ENCODE measurements at regions of chr18 and their contacts with region 1.

Region 1: GRCh38 chr18:3281456-3282400 is 19.8 kb downstream of the MYL12B start:
- DNase-seq: peak; percentile 73
- H3K4me3 ChIP-seq: no peak overlapping the region
- CTCF ChIP-seq: peak; percentile 8

Region 2: GRCh38 chr18:2881088-2881839 is 400.5 kb before region 1 on chr18:
- in situ Hi-C with region 1: no loop called
- DNase-seq: peak; percentile 54
- H3K4me3 ChIP-seq: no peak overlapping the region
- CTCF ChIP-seq: no peak

Region 3: DNA sequence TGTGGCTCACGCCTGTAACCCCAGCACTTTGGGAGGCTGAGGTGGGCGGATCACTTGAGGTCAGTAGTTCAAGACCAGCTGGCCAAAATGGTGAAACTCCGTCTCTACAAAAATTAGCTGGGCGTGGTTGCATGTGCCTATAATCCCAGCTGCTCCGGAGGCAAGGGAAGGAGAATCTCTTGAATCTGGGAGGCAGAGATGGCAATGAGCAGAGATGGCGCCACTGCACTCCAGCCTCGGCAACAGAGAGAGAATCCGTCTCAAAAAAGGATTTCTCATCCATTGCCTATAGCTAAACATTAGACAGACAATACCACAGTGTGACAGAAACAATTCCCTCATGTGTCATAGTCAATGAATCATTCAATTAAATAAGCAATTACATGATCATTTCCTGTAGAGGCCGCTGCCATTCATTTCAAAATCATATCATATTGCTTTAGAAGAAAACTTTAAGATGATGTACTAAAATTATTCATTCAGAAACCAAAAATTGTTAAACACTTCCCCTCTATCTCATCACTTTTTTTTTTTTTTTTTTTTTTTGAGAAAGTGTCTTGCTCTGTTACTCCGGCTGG is 98.7 kb after region 1 on chr18:
- in situ Hi-C with region 1: no loop called
- DNase-seq: no peak
- H3K4me3 ChIP-seq: no peak overlapping the region
- CTCF ChIP-seq: peak; percentile 8

Region 4: GRCh38 chr18:3665780-3666525 is 384.2 kb after region 1 on chr18:
- in situ Hi-C with region 1: loop called (anchors 5 kb)
- DNase-seq: peak; percentile 86
- H3K4me3 ChIP-seq: peak overlapping the region; percentile 1
- CTCF ChIP-seq: peak; percentile 93

Measured in astrocyte of the cerebellum (primary cell).